ENCODE measurements at regions of chr15 and their contacts with region 1.

Region 1: DNA sequence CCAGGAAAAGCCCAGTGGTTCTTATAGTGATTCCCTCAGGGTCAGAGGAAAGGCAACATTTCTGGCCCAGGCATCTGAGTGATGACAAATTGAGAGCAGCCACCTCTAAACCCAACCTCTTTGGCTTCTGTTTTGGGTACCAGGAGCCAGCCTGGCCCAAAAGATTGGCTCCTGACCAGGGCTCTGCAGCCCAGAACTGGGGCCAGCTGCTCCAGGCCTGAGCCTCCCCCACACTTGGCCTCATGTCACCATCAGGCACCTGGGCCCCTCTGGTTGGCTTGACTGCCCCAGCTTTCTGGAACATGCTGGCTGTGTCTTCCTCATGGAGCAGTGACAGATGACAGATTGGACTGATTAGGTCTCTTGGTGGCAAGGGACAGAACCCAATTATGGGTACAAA is 26.0 kb upstream of the HCN4 start:
- DNase-seq: no peak
- ATAC-seq: peak; percentile 92

Region 2: DNA sequence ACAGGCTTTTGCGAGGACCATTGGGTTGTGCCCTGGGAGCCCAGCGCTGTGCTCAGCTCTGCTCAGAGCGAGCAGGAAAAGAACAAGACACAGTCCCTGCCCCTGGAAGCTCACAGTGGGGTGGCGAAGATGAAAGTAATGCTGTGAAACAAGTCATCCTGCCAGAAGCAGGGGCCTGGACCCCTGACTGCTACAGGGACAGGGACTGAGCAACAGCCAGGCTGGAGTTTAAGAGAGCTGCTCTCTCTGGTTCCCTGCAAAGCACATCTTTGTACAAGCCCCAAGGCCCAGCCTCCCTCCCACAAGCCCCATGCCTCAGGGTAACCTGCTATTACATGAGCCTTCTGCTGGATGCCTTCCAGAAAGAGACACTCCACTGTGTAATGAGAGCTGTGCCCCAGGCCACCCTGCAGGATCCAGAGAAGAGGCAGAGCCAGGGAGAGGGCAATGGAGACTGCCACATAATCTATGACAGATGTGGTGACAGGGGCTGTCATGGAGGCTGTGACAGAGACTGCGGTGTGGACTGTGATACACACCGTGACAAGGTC is 19.0 kb before region 1 on chr15:
- intact Hi-C with region 1: loop called (anchors 2 kb)
- DNase-seq: no peak
- ATAC-seq: peak; percentile 65

Region 3: GRCh38 chr15:73518180-73518862 is 123.5 kb after region 1 on chr15:
- intact Hi-C with region 1: loop called (anchors 5 kb)
- DNase-seq: no peak
- ATAC-seq: peak; percentile 49

Region 4: DNA sequence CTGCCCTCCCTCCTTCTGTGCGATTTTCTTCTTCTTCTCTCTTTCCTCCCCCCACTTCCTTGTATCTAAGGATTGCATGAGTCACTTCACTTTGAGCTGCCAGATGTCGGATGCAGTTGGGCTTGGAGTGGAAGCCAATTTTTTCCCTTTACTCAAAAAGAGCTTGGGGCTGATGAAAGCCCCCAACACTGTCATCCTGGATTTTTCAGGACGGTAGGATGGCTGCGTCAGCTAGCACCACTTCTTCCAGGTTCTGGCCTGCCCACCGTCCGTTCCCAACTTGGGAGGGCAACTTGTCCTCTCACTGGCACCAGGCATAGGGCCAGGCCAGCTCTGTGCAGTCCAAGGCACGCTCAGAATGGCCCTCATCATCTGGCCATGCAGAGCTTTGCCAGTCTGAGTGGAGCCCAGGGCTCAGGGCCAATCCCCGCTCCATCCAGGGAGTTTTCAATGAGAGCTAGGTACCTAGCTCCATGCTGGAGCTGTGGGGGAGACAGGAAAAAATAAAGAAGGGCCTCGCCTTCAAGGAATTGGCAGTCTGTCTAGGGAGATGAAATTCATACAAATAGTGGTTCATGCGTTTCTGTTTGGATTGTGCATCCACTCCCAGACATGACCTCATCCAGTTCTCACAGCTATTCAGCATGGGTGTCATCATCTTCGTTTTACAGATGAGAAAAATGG is 406.0 kb after region 1 on chr15:
- intact Hi-C with region 1: no loop called
- DNase-seq: peak; percentile 86
- ATAC-seq: peak; percentile 75

Region 5: GRCh38 chr15:73972984-73973682 is 578.4 kb after region 1 on chr15:
- intact Hi-C with region 1: no loop called
- DNase-seq: peak; percentile 89
- ATAC-seq: peak; percentile 92

Measured in Right ventricle myocardium inferior (tissue), 1 donor.